IMR-90 (cell line): ENCODE measurements at regions of chr2 and their contacts with region 1.

Region 1: DNA sequence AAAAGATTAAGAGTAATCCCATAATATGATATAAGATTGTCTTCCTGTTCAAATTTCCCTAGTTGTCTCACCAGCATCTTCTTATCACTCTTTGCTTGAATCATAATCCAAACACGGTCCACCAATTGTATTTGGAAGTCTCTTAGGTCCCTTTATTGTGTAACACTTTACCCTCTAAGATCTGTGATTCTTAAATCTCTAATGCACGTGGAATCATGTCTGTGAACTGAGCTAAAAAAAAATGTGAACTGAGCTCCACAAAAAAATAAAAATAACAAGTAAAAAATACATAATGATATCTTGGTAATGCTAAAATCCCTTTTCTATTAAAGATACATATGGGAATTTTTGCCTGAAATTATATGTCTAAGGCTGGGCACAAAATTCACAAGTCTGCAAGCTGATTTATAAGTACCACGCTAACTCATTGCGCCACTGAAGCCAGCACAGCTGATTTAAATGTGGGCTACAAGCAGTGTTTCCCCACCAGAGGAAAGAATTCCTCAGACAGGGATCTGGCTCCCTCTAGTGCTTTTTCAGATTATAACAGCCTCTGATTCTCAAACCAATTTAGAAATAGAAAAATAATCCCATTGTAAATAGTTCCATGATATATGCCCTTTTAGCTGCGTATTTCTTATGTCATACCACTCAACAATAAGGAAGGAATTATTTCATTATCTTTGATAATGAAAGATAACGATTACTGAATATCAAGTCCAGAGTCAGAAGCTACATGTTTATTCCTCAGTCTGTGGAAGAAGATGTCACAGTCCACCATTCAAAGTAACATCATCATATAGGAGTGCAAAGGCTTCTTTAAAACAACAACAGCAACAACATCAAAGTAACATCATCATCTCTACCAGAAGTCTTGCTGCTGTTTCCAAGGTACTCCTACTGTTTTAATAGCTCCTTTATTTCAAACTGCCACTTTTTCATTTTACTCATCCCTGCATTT is 22.9 kb downstream of the RBM43 start:
- DNase-seq: peak; percentile 89
- ATAC-seq: peak; percentile 79
- H3K4me3 ChIP-seq: no peak overlapping the region
- H3K27ac ChIP-seq: no peak overlapping the region; the same call in 1 of the 2 replicates
- H3K4me1 ChIP-seq: peaks cover 9% of the 10 kb centered on the region
- H3K27me3 ChIP-seq: no peaks in the 10 kb centered on the region
- CTCF ChIP-seq: peak; percentile 95
- POLR2A ChIP-seq: peak; percentile 47; the same call in 1 of the 2 replicates
- RAD21 ChIP-seq: peak; percentile 99

Region 2: DNA sequence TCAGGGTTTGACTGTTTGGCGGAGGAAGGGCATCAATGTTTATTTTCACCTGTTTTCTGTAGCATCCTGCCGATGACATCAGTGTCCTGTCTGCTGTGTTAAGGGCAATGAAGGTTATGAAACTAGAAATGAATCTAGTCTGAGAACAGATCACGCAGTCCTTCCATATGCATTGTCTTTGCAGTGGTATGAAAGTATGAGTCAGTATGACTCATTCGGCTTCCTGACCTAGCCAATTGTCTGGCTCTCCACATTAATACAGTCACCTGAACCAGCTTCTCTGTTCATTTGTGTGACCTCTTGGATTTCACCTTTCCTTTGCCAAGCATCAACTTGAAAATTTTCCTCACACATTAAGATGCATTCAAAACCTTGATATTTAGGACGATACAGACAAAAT is 1105.2 kb before region 1 on chr2:
- CTCF ChIA-PET with region 1: no interaction called
- POLR2A ChIA-PET with region 1: no interaction called
- dilution Hi-C with region 1: no loop called
- in situ Hi-C with region 1: loop called (anchors 25 kb)
- intact Hi-C with region 1: no loop called
- DNase-seq: peak; percentile 92
- ATAC-seq: peak; percentile 49
- H3K4me3 ChIP-seq: no peak overlapping the region
- H3K27ac ChIP-seq: no peak overlapping the region
- H3K4me1 ChIP-seq: peaks cover 5% of the 10 kb centered on the region; the same call in 1 of the 2 replicates
- H3K27me3 ChIP-seq: no peaks in the 10 kb centered on the region
- CTCF ChIP-seq: no peak
- POLR2A ChIP-seq: no peak
- RAD21 ChIP-seq: peak; percentile 18; the same call in 1 of the 2 replicates

Region 3: DNA sequence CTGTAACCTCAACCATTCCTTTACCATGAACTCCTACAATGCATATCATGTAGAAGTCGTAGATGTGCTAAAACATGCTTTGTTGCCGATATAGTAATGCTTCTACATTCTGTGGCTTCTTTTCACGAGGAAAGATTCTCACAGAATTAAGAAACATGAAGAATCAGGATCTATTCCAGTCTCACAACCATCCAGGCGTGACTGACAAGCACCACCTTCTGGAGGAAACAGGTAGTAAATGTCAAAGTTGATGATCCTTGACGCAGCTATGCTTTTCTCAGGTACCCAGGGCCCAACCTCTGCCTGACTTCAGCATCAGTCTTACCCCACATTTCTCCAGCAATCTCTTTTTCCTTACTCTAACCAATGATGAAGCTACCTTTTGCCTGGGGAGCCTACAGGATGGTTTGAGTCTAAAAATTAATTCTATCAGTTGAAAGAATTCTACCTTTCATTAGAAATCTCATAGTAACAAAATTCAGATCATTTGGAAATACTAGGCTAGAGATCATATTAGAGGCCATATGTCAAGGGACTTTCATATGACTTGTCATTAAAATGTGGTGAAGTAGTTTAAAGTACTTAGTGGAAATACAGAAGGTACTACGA is 628.0 kb before region 1 on chr2:
- CTCF ChIA-PET with region 1: interaction called, 4 read pairs
- POLR2A ChIA-PET with region 1: no interaction called
- dilution Hi-C with region 1: no loop called
- in situ Hi-C with region 1: loop called (anchors 25 kb)
- intact Hi-C with region 1: loop called (anchors 2 kb)
- DNase-seq: peak; percentile 69
- ATAC-seq: peak; percentile 16; the same call in 1 of the 2 replicates
- H3K4me3 ChIP-seq: no peak overlapping the region
- H3K27ac ChIP-seq: peak overlapping the region; percentile 49; the same call in 1 of the 2 replicates
- H3K4me1 ChIP-seq: peaks cover 13% of the 10 kb centered on the region
- H3K27me3 ChIP-seq: no peaks in the 10 kb centered on the region
- CTCF ChIP-seq: peak; percentile 65
- POLR2A ChIP-seq: no peak
- RAD21 ChIP-seq: peak; percentile 87

Region 4: DNA sequence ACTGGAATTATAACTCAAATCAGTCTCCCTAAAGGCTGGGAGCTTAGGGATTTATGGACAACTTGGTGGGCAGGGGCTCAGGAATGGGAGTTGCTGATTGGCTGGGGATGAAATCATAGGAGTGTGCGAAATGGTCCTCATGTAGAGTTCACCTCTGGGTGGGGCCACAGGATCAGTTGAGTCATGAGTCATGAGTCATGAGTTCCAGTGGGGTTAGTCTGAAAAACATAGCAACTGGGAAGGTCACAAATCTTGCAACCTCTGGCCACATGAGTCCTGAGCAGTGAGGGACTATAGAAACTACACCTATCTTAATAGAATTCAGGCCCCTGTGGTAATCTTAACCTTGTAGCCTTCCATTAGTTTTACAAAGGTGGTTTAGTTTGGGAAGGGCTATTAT is 360.5 kb before region 1 on chr2:
- CTCF ChIA-PET with region 1: interaction called, 3 read pairs
- POLR2A ChIA-PET with region 1: no interaction called
- dilution Hi-C with region 1: no loop called
- in situ Hi-C with region 1: no loop called
- intact Hi-C with region 1: loop called (anchors 5 kb)
- DNase-seq: peak; percentile 52
- ATAC-seq: no peak
- H3K4me3 ChIP-seq: no peak overlapping the region
- H3K27ac ChIP-seq: no peak overlapping the region
- H3K4me1 ChIP-seq: peaks cover 9% of the 10 kb centered on the region
- H3K27me3 ChIP-seq: no peaks in the 10 kb centered on the region
- CTCF ChIP-seq: no peak
- POLR2A ChIP-seq: no peak
- RAD21 ChIP-seq: no peak

Region 5: GRCh38 chr2:151032741-151033191 is 206.0 kb before region 1 on chr2:
- CTCF ChIA-PET with region 1: no interaction called
- POLR2A ChIA-PET with region 1: no interaction called
- dilution Hi-C with region 1: no loop called
- in situ Hi-C with region 1: no loop called
- intact Hi-C with region 1: loop called (anchors 2 kb)
- DNase-seq: peak; percentile 100
- ATAC-seq: peak; percentile 85
- H3K4me3 ChIP-seq: no peak overlapping the region
- H3K27ac ChIP-seq: peak overlapping the region; percentile 71; the same call in 1 of the 2 replicates
- H3K4me1 ChIP-seq: peaks cover 5% of the 10 kb centered on the region
- H3K27me3 ChIP-seq: no peaks in the 10 kb centered on the region
- CTCF ChIP-seq: no peak
- POLR2A ChIP-seq: no peak
- RAD21 ChIP-seq: no peak